A673 (cell line): ENCODE measurements at regions of chr11 and their contacts with region 1.

Region 1: GRCh38 chr11:34051349-34052035 is at the start of gene CAPRIN1:
- DNase-seq: peak; percentile 99
- H3K4me3 ChIP-seq: peak within 1 kb of the TSS; percentile 71
- H3K27ac ChIP-seq: peak within 1 kb of the TSS; percentile 99
- H3K4me1 ChIP-seq: peaks cover 61% of the 10 kb centered on the region
- H3K27me3 ChIP-seq: no peaks in the 10 kb centered on the region
- CTCF ChIP-seq: no peak
- total RNA-seq, gene CAPRIN1: 1,416 and 1,470 TPM in 2 replicates

Region 2: GRCh38 chr11:33761471-33761870 is 290.0 kb before region 1 on chr11:
- CTCF ChIA-PET with region 1: no interaction called
- POLR2A ChIA-PET with region 1: no interaction called
- intact Hi-C with region 1: no loop called
- DNase-seq: no peak
- H3K4me3 ChIP-seq: no peak overlapping the region
- H3K27ac ChIP-seq: no peak overlapping the region
- H3K4me1 ChIP-seq: no peaks in the 10 kb centered on the region
- H3K27me3 ChIP-seq: no peaks in the 10 kb centered on the region
- CTCF ChIP-seq: no peak

Region 3: GRCh38 chr11:33835143-33835878 is 216.2 kb before region 1 on chr11:
- CTCF ChIA-PET with region 1: interaction called, 3 read pairs
- POLR2A ChIA-PET with region 1: no interaction called
- intact Hi-C with region 1: loop called (anchors 1 kb)
- DNase-seq: peak; percentile 89
- H3K4me3 ChIP-seq: peak overlapping the region; percentile 24
- H3K27ac ChIP-seq: peak overlapping the region; percentile 57
- H3K4me1 ChIP-seq: peaks cover 39% of the 10 kb centered on the region
- H3K27me3 ChIP-seq: no peaks in the 10 kb centered on the region
- CTCF ChIP-seq: peak; percentile 86

Region 4: GRCh38 chr11:33930317-33931021 is 121.0 kb before region 1 on chr11:
- CTCF ChIA-PET with region 1: no interaction called
- POLR2A ChIA-PET with region 1: interaction called, 3 read pairs
- intact Hi-C with region 1: loop called (anchors 2 kb)
- DNase-seq: peak; percentile 100
- H3K4me3 ChIP-seq: peak overlapping the region; percentile 11
- H3K27ac ChIP-seq: peak overlapping the region; percentile 84
- H3K4me1 ChIP-seq: peaks cover 34% of the 10 kb centered on the region
- H3K27me3 ChIP-seq: no peaks in the 10 kb centered on the region
- CTCF ChIP-seq: no peak

Region 5: DNA sequence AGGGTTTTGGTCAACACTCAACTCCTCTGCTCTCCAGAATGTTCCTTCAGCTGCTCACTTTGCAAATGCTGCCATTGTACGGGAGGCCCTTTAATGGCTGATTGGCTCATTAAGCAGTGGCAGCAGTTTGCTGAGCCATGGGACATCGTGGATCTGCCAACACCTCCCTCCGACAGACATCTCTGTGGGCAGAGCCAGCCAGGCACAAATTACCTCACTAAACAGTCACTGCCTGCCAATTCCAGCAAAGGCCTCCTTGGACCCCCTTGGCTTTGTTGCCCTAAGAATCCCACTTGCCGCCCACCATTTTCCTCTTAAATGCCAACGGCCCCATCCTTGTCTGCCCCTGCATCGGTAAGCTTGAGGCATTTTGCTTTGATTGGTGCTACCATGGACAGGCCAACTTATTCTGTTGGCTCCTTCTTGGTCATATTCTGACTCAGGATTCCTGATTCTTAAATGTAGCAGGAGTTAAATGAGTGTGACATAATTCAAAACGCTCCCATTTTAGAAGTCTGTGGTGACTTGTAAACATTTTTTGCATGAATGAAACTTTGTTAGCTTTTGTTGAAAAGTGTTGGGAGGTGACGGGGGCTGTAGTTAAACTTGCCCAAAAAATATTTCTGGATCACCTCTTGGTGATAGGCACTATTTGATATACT is 102.1 kb before region 1 on chr11:
- CTCF ChIA-PET with region 1: no interaction called
- POLR2A ChIA-PET with region 1: no interaction called
- intact Hi-C with region 1: no loop called
- DNase-seq: no peak
- H3K4me3 ChIP-seq: no peak overlapping the region
- H3K27ac ChIP-seq: no peak overlapping the region
- H3K4me1 ChIP-seq: peaks cover 25% of the 10 kb centered on the region
- H3K27me3 ChIP-seq: no peaks in the 10 kb centered on the region
- CTCF ChIP-seq: no peak

Region 6: GRCh38 chr11:34065505-34066203 is 14.2 kb after region 1 on chr11:
- CTCF ChIA-PET with region 1: interaction called, 5 read pairs
- POLR2A ChIA-PET with region 1: interaction called, 13 read pairs
- intact Hi-C with region 1: no loop called
- DNase-seq: peak; percentile 64
- H3K4me3 ChIP-seq: no peak overlapping the region
- H3K27ac ChIP-seq: peak overlapping the region; percentile 34
- H3K4me1 ChIP-seq: peaks cover 87% of the 10 kb centered on the region
- H3K27me3 ChIP-seq: no peaks in the 10 kb centered on the region
- CTCF ChIP-seq: peak; percentile 26; the same call in 1 of the 2 replicates

Region 7: GRCh38 chr11:34263440-34264172 is 212.1 kb after region 1 on chr11:
- CTCF ChIA-PET with region 1: no interaction called
- POLR2A ChIA-PET with region 1: no interaction called
- intact Hi-C with region 1: no loop called
- DNase-seq: no peak
- H3K4me3 ChIP-seq: no peak overlapping the region
- H3K27ac ChIP-seq: no peak overlapping the region
- H3K4me1 ChIP-seq: peaks cover 50% of the 10 kb centered on the region
- H3K27me3 ChIP-seq: no peaks in the 10 kb centered on the region
- CTCF ChIP-seq: no peak